GM12878 (cell line): ENCODE measurements at regions of chr5 and their contacts with region 1.

Region 1: DNA sequence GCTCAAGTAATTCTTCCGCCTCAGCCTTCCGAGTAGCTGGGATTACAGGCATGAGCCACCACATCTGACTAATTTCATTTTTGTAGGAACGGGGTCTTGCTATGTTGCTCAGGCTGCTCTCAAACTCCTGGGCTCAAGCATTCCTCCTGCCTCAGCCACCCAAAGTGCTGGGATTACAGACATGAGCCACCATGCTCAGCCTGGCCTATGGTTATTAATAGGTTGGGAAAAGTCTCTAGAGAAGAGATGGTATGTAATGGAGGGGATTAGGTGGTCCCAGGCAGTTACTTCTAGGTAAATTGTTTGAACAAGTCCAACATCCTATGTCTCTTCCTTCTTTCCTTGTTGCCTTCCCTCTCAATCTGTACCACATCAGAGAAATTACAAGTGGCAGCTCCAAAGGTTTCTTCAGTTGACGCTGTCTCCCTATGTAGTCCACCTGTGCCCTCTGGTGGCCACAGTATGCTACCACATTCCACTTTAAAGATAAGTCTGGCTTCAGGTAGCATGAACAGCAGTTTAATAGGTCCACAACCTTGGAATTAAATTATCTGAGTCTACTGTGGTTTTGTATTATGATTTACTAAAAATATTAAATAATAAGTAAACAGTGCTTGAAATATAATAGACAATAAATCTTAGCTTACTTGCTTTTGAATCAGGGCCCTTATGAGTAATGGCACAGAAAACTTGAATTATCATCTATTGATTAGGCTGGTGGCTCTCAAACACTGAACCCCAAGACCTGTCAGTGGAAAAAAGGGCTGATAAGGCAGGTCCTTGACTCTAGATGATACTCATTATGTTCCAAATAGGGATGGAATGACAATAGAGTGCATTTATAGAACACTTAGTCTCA is 9.7 kb downstream of the TIGD6 start:
- DNase-seq: peak; percentile 26
- ATAC-seq: peak; percentile 95
- H3K4me3 ChIP-seq: no peak overlapping the region
- H3K27ac ChIP-seq: no peak overlapping the region
- H3K4me1 ChIP-seq: no peaks in the 10 kb centered on the region
- H3K27me3 ChIP-seq: no peaks in the 10 kb centered on the region
- CTCF ChIP-seq: peak; percentile 86 to 96 (median 92); a peak in 5 of 6 replicates
- EP300 ChIP-seq: no peak
- POLR2A ChIP-seq: no peak
- RAD21 ChIP-seq: peak; percentile 99

Region 2: DNA sequence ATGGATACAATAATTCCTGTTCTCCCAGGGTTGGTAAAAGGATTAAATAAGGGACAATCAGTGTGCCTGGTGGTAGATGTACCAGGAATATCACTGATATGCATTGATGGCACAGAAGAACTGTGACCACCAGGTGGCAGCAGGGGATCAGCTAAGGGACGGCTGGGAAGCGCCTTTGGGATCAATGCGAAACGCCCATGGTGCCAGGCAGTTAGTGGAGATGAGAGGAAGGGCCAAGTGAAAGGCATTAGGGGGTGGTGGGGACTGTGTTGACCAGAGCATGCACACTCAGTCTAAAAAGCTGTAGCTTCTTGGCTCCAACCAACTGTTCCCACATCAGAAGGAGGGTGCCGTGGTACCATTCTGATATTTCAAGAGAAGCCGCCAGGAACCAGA is 353.9 kb before region 1 on chr5:
- CTCF ChIA-PET with region 1: interaction called, 132 read pairs
- POLR2A ChIA-PET with region 1: interaction called, 3 read pairs
- RAD21 ChIA-PET with region 1: interaction called, 23 read pairs
- SMC1A ChIA-PET with region 1: interaction called, 33 read pairs
- in situ Hi-C with region 1: loop called (anchors 5 kb)
- intact Hi-C with region 1: loop called (anchors 1 kb)
- DNase-seq: no peak
- ATAC-seq: peak; percentile 85
- H3K4me3 ChIP-seq: no peak overlapping the region
- H3K27ac ChIP-seq: no peak overlapping the region
- H3K4me1 ChIP-seq: peaks cover 12% of the 10 kb centered on the region
- H3K27me3 ChIP-seq: no peaks in the 10 kb centered on the region
- CTCF ChIP-seq: peak; percentile 74 to 78 (median 77)
- EP300 ChIP-seq: no peak
- POLR2A ChIP-seq: no peak
- RAD21 ChIP-seq: peak; percentile 87

Region 3: GRCh38 chr5:149860801-149861322 is 129.9 kb before region 1 on chr5:
- CTCF ChIA-PET with region 1: interaction called, 12 read pairs
- POLR2A ChIA-PET with region 1: no interaction called
- RAD21 ChIA-PET with region 1: interaction called, 4 read pairs
- SMC1A ChIA-PET with region 1: interaction called, 7 read pairs
- in situ Hi-C with region 1: no loop called
- intact Hi-C with region 1: no loop called
- DNase-seq: peak; percentile 33
- ATAC-seq: peak; percentile 89
- H3K4me3 ChIP-seq: no peak overlapping the region
- H3K27ac ChIP-seq: peak overlapping the region; percentile 26; the same call in 1 of the 2 replicates
- H3K4me1 ChIP-seq: peaks cover 9% of the 10 kb centered on the region
- H3K27me3 ChIP-seq: no peaks in the 10 kb centered on the region
- CTCF ChIP-seq: no peak
- EP300 ChIP-seq: peak in 1 of 2 experiments; percentile 31; a peak in 1 of 4 replicates
- POLR2A ChIP-seq: no peak
- RAD21 ChIP-seq: no peak

Region 4: GRCh38 chr5:149960272-149961185 is 30.2 kb before region 1 on chr5 and contains the start of gene SLC26A2:
- CTCF ChIA-PET with region 1: interaction called, 8 read pairs
- POLR2A ChIA-PET with region 1: no interaction called
- RAD21 ChIA-PET with region 1: interaction called, 7 read pairs
- SMC1A ChIA-PET with region 1: interaction called, 10 read pairs
- in situ Hi-C with region 1: no loop called
- intact Hi-C with region 1: no loop called
- DNase-seq: peak; percentile 93
- ATAC-seq: peak; percentile 98
- H3K4me3 ChIP-seq: peak within 1 kb of the TSS; percentile 67
- H3K27ac ChIP-seq: peak within 1 kb of the TSS; percentile 70
- H3K4me1 ChIP-seq: peaks cover 12% of the 10 kb centered on the region
- H3K27me3 ChIP-seq: no peaks in the 10 kb centered on the region; a peak in 1 of 4 replicates
- CTCF ChIP-seq: no peak
- EP300 ChIP-seq: no peak; a peak in 1 of 4 replicates
- POLR2A ChIP-seq: peak; percentile 94
- RAD21 ChIP-seq: no peak
- polyA plus RNA-seq, gene SLC26A2: 1.7 to 1.9 TPM

Region 5: GRCh38 chr5:150009671-150010387 is 19.1 kb after region 1 on chr5:
- CTCF ChIA-PET with region 1: interaction called, 23 read pairs
- POLR2A ChIA-PET with region 1: no interaction called
- RAD21 ChIA-PET with region 1: no interaction called
- SMC1A ChIA-PET with region 1: interaction called, 5 read pairs
- in situ Hi-C with region 1: no loop called
- intact Hi-C with region 1: no loop called
- DNase-seq: no peak
- ATAC-seq: no peak; the same call in 2 of the 3 replicates
- H3K4me3 ChIP-seq: no peak overlapping the region
- H3K27ac ChIP-seq: no peak overlapping the region
- H3K4me1 ChIP-seq: no peaks in the 10 kb centered on the region; the same call in 1 of the 2 replicates
- H3K27me3 ChIP-seq: no peaks in the 10 kb centered on the region
- CTCF ChIP-seq: no peak
- EP300 ChIP-seq: no peak
- POLR2A ChIP-seq: no peak
- RAD21 ChIP-seq: no peak

Region 6: DNA sequence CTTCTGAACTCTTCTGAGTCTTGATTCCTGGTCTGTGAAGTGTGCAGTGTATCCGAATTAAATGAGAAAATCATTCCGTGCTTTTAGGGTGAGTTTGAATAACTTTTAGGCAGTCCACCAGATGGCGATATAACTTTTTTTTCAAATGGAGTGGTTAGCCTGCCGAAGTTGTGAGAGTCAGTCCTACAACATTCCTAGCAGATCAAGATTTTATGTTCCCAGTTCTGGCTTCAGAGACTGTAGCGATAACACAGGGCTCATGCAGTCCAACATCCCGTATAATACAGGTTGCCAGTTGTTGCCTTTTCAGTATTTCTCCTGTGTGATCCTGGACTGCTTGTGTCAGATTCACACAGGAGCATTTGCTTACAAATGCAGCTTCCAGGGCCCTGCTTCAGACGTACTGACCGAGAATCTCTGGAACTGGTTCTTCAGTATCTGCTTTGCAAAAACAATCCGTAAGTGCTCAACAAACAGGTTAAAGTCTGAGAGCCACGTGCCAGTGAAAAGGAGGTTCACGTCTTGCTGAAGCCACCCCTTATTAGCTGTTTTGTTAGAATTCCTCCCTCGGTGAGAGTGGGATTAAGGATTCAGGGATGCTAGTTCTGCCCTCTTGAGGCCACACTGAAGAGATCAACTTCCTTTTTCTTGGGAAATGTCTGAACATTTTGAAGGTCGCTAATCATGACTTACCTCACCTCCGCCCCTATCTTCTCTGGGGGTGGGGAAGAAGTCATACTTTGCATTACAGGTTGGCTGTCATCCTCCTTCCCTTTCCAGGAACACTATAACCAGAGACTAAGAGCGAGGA is 810.6 kb after region 1 on chr5:
- CTCF ChIA-PET with region 1: no interaction called
- POLR2A ChIA-PET with region 1: no interaction called
- RAD21 ChIA-PET with region 1: no interaction called
- SMC1A ChIA-PET with region 1: no interaction called
- in situ Hi-C with region 1: no loop called
- intact Hi-C with region 1: no loop called
- DNase-seq: no peak
- ATAC-seq: peak; percentile 83
- H3K4me3 ChIP-seq: no peak overlapping the region
- H3K27ac ChIP-seq: no peak overlapping the region
- H3K4me1 ChIP-seq: no peaks in the 10 kb centered on the region
- H3K27me3 ChIP-seq: no peaks in the 10 kb centered on the region
- CTCF ChIP-seq: peak; percentile 49 to 60 (median 52); a peak in 5 of 6 replicates
- EP300 ChIP-seq: no peak
- POLR2A ChIP-seq: no peak
- RAD21 ChIP-seq: peak; percentile 61